PC-9 (cell line): ENCODE measurements at regions of chr1 and their contacts with region 1.

Region 1: DNA sequence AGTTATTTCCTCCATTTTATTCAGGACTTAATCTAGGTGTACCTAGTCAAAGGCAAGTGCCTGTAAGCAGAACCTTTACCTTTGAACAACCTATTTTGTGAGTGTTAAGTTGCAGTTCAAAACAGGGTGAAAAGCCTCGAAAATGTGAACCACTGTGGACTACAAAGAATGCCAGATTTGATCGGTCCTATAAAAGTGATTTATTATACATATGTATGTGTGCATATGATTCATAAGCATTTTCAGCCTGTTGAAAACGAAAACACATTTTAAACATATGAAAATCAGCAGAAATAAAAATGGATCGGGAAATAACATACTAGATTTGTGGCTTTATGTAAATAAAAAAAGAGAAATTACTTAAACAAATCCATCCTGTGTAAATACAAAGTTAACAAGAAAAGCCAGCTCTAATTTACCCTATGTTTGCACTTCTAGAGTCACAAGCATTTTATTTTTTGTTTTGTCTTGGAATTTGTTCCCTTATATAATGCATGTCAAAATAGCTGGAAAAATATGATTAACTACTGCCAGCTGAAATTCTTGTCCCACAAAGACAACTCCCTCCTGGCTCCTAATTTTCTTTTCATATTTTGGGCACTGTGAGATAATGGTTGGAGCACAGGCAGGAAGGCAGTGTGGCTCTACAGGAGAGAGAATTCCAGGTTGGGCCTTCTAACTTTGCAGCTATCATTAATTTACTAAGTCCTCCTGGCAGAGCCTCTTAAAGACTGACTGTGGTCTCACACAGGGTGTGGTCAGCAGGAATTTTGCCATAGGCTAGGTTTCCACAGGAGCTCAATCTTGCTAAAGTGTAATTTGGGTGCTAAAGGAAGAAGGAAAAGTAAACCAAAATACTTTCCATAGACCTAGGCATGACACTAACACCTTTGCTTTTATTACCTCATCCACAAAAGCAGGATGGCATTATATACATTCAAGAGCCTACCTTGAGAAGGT is 70.2 kb upstream of the CDC42BPA start:
- DNase-seq: peak; percentile 37 to 81
- H3K4me3 ChIP-seq: no peak overlapping the region
- H3K27ac ChIP-seq: peak overlapping the region; percentile 30
- H3K4me1 ChIP-seq: peaks cover 14% of the 10 kb centered on the region
- H3K27me3 ChIP-seq: no peaks in the 10 kb centered on the region
- CTCF ChIP-seq: no peak

Region 2: GRCh38 chr1:227240983-227241382 is 147.5 kb before region 1 on chr1:
- CTCF ChIA-PET with region 1: no interaction called
- POLR2A ChIA-PET with region 1: interaction called, 11 read pairs
- intact Hi-C with region 1: no loop called
- DNase-seq: no peak
- H3K4me3 ChIP-seq: no peak overlapping the region
- H3K27ac ChIP-seq: no peak overlapping the region
- H3K4me1 ChIP-seq: peaks cover 11% of the 10 kb centered on the region
- H3K27me3 ChIP-seq: no peaks in the 10 kb centered on the region
- CTCF ChIP-seq: no peak

Region 3: GRCh38 chr1:227369102-227369760 is 19.3 kb before region 1 on chr1:
- CTCF ChIA-PET with region 1: no interaction called
- POLR2A ChIA-PET with region 1: interaction called, 27 read pairs
- intact Hi-C with region 1: no loop called
- DNase-seq: no peak
- H3K4me3 ChIP-seq: no peak overlapping the region
- H3K27ac ChIP-seq: no peak overlapping the region
- H3K4me1 ChIP-seq: peaks cover 17% of the 10 kb centered on the region
- H3K27me3 ChIP-seq: no peaks in the 10 kb centered on the region
- CTCF ChIP-seq: no peak

Region 4: DNA sequence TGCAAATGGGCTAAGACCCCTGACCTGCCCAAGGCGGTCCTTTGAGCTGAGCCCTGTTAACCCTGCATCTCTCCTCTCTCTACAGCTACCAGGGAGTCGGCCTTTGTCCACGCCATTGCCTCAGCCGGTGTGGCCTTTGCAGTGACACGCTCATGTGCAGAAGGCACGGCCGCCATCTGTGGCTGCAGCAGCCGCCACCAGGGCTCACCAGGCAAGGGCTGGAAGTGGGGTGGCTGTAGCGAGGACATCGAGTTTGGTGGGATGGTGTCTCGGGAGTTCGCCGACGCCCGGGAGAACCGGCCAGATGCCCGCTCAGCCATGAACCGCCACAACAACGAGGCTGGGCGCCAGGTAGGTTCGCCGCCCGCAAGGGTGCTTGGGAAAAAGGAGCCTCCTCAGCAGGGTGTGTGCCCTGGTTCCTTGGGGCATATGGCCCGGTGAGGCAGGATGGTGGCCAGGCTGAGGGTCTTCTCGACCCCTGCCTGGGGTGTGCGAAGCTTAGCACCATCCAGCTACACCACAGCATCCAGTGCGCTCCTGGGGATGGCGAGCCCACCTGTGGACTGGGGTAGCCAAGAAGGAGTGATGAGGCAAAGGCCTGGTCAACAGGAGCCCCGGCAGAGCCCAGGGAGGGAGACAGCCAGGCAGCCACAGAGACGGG is 662.2 kb after region 1 on chr1:
- CTCF ChIA-PET with region 1: no interaction called
- POLR2A ChIA-PET with region 1: no interaction called
- intact Hi-C with region 1: no loop called
- DNase-seq: no peak
- H3K4me3 ChIP-seq: no peak overlapping the region
- H3K27ac ChIP-seq: no peak overlapping the region
- H3K4me1 ChIP-seq: peaks cover 23% of the 10 kb centered on the region
- H3K27me3 ChIP-seq: no peaks in the 10 kb centered on the region
- CTCF ChIP-seq: no peak